ENCODE measurements at regions of chr6 and their contacts with region 1.

Region 1: DNA sequence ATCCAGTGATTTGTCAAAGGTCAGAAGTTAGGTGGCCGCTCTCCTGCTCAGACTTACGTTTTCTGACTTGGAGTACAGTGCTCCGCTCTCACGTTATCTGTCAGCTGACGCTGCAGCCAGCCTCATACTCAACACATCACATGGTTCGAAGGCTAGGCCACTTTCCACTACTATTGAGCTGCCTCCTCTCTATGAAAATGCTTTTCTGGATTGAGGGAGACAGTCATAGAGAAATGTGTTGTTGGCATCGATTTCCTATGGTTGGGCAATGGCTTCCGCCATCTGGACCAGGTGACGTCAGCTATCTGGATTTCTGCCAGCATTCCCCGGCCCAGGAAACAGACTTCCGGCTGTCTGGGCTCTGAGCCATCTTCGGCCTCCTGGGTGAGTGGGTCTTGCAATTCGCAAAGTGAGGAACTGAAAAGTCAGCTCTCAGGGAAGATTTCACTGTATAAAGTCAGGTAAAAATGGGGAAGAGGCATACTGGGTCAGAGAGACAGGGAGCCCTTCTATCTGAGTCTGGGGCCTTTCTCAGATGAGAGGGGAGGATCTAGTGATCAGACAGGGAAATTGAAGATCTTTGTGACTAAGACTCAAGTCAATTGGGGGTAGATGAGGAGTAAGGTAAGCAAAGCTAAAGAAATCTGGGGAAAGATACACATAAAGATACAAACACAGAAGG is 37.5 kb upstream of the IER3 start:
- DNase-seq: peak; percentile 98
- H3K4me3 Mint-ChIP-seq: peak overlapping the region; percentile 42
- H3K27ac Mint-ChIP-seq: peak overlapping the region; percentile 91
- H3K4me1 Mint-ChIP-seq: peaks cover 57% of the 10 kb centered on the region
- H3K27me3 Mint-ChIP-seq: no peaks in the 10 kb centered on the region
- CTCF ChIP-seq: no peak

Region 2: DNA sequence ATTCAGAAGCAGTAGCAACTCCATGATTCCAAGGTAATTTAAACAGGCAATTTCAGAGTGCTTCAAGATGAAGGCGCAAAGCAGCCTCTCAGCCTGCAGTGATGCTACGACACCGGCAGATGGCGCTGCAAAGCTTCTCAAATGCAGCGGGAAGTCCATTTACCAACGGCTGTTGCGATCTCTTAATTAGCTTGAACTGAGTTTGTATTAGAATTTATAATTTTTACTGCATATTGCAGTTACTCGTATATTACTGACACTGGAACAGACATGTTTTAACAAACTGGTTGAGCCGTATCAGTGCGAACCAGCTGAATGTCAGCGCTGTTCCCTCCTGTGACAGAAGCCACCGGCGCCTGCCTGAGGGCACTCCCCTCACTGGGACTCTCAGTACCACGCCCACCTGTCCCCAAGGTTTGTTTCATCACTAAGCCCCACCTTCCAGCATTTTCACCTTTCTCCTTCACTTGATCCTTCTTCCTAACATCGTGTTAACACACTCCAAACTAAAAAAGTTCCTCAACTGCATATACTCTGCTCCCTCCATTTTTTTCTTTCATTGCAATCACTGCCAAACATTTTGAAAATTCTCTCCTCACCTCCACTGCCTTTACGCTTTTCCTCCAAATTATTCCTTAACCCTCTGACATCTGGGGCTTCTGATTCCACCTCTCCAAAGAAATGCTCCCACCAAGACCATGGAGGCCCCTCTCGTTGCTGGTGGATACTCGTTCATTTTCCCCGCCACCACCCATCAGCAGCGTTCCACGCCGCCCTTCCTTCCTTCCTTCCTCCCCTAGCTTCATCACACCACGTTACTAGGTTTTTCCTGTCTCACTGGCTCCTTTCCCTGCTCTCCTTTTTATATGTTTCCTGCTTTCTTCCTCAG is 240.1 kb before region 1 on chr6:
- CTCF ChIA-PET with region 1: no interaction called
- POLR2A ChIA-PET with region 1: no interaction called
- intact Hi-C with region 1: no loop called
- DNase-seq: peak; percentile 74
- H3K4me3 Mint-ChIP-seq: peak overlapping the region; percentile 15
- H3K27ac Mint-ChIP-seq: no peak overlapping the region
- H3K4me1 Mint-ChIP-seq: peaks cover 12% of the 10 kb centered on the region
- H3K27me3 Mint-ChIP-seq: no peaks in the 10 kb centered on the region
- CTCF ChIP-seq: peak; percentile 92

Region 3: DNA sequence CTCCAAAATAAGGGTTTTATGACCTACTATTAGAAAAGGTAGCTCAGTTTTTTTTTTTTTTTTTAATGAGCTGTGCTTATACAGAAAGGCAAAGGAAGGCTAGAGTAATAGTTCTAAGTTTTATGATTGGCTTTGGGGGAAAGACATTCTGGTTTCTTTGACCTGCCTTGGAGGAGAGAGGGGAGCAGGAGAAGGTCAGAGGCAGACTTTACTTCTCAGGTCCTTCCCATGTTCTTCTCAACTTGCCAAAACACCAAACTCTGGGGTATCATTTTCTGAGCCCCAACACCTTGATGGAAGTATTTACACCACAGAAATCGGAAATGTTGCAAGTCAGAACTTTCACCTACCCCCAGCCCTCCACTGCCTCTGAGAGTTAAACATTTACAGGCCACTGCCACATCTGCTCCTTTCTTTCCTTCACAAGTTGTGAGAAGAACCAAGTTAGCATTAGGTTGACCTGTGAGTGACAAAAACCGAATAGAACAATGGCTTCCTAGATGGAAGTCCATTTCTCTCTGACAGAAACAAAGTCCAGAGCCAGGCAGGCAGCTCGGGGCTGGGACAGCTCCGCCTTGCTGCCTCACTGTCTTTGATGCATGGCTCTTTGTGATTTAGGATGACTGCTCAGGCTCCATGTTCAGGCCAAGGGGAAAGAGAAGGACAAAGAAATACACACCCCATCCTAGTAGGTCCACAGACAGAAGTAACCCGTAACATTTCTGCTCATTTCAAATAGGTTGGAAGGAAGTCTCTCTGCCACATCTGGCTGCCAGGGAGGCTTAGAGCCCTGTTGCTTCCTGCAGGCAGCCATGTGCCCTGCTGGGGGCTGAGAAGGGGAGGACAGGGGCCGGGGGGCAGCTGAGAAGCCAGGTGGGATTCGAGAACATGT is 18.3 kb before region 1 on chr6:
- CTCF ChIA-PET with region 1: interaction called, 3 read pairs
- POLR2A ChIA-PET with region 1: interaction called, 74 read pairs
- intact Hi-C with region 1: no loop called
- DNase-seq: no peak
- H3K4me3 Mint-ChIP-seq: no peak overlapping the region
- H3K27ac Mint-ChIP-seq: no peak overlapping the region
- H3K4me1 Mint-ChIP-seq: peaks cover 24% of the 10 kb centered on the region
- H3K27me3 Mint-ChIP-seq: no peaks in the 10 kb centered on the region
- CTCF ChIP-seq: no peak

Region 4: DNA sequence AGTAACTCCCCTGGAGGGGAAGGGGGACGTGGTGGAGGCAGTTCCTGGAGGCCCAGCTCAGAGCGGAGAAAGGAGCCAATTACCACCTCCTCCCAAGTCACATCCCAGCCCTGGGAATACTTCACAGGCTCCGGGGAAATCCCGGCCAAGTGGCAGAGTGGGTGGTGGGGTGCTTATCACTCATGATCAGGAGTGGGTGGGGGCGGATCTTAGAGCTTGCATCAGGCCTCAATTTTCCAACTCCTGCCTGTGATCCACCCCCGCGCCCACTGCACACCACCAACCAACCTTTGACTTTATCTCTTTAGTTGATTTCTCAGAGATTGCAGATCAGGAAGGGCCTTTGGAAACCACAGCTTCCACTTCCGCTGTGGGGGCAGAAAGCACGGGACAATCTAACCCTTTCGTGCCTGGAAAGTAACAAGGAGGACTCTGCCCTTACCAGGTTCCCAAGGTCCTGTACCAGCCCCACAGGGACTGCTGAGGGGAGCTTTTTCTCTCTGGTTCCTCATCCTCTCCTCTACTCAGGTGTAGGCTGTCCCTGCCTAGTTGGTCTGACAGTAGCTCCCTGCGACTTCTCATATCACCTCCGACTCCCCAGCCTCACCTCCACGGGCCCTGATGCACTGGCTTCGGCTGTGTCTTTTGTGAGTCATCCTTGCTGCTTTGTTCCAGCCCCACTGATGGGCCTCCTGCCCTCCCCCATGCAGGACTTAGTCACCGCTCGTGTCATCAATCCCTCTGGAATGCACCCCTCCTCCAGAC is 12.6 kb before region 1 on chr6:
- CTCF ChIA-PET with region 1: interaction called, 4 read pairs
- POLR2A ChIA-PET with region 1: interaction called, 74 read pairs
- intact Hi-C with region 1: no loop called
- DNase-seq: peak; percentile 94
- H3K4me3 Mint-ChIP-seq: peak overlapping the region; percentile 48
- H3K27ac Mint-ChIP-seq: peak overlapping the region; percentile 76
- H3K4me1 Mint-ChIP-seq: peaks cover 36% of the 10 kb centered on the region
- H3K27me3 Mint-ChIP-seq: no peaks in the 10 kb centered on the region
- CTCF ChIP-seq: no peak

Region 5: DNA sequence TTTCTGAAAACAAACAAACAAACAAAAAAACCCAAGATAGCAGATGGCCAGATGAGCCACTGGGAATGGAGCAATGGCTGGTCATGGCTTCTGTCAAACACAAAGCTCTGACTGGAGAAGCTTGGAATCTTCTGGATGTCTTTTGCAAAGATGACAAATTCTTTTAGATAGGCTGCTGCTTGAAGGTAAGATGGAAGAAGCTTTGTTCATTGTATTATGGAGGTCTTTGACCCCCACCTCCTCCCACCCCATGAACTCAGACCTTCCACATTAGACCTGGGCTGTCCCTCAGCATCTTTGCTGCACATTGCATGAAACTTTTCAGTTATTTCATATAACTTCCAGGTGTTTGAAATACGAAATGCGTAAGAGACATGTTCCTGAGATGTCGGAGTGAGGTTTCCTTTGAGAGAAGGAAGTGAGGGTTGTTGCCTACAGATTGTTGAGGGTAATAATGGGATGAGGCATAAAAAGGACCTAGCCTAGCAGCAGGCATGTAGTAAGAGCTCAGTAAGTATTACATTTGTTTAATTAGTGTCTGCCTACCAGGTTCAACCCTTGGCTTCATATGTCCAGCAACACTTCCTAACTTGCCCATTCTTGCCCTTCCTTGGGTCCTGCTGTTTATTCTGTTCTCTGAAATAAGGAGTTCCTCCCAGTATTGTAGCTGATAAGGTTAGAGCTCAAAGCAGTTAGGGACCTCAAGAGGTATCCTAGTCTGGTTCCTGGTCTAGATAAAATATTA is 13.8 kb after region 1 on chr6:
- CTCF ChIA-PET with region 1: no interaction called
- POLR2A ChIA-PET with region 1: interaction called, 11 read pairs
- intact Hi-C with region 1: no loop called
- DNase-seq: no peak
- H3K4me3 Mint-ChIP-seq: no peak overlapping the region
- H3K27ac Mint-ChIP-seq: no peak overlapping the region
- H3K4me1 Mint-ChIP-seq: no peaks in the 10 kb centered on the region
- H3K27me3 Mint-ChIP-seq: no peaks in the 10 kb centered on the region
- CTCF ChIP-seq: no peak

Region 6: DNA sequence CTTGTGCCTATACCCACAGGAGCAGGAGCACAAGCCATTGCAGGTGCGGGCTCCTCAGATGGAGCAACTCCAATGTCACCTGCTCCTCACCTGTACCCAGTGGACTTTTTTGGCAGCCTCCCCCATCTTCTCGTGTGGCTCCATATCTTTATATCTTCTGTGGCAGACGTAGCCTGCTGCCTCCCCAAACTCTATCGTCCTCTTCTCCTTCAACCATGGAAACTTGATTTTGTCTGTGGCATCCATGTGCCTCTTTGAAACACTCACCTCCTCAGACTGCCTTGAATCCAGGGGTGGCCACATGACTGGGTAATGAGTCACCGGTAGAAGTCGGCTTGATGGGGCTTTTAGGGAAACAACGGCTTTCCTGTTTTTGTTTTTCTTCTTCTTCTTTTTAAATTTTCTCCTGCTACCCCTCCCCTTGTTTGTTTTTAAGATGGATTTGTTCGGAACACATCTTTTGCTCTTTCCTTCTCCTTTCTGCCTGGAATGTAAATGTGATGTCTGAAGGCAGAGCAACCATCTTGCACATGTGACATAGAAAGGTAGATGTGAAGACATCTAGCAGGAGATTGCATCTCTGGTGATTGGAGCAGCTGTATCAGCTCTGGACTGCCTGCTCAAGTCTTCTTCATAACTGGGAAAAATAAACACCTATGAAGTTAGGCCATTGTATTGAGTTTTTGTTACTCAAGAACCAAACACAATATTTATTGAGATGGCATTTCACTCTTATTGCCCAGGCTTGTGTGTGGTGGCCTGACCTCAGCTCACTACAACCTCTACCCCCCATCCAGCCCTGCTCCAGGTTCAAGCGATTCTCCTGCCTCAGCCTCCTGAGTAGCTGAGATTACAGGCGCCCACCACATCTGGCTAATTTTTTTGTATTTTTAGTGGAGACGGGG is 32.5 kb after region 1 on chr6:
- CTCF ChIA-PET with region 1: interaction called, 37 read pairs
- POLR2A ChIA-PET with region 1: interaction called, 54 read pairs
- intact Hi-C with region 1: loop called (anchors 1 kb)
- DNase-seq: peak; percentile 88
- H3K4me3 Mint-ChIP-seq: no peak overlapping the region
- H3K27ac Mint-ChIP-seq: peak overlapping the region; percentile 92
- H3K4me1 Mint-ChIP-seq: peaks cover 39% of the 10 kb centered on the region
- H3K27me3 Mint-ChIP-seq: no peaks in the 10 kb centered on the region
- CTCF ChIP-seq: no peak

Region 7: DNA sequence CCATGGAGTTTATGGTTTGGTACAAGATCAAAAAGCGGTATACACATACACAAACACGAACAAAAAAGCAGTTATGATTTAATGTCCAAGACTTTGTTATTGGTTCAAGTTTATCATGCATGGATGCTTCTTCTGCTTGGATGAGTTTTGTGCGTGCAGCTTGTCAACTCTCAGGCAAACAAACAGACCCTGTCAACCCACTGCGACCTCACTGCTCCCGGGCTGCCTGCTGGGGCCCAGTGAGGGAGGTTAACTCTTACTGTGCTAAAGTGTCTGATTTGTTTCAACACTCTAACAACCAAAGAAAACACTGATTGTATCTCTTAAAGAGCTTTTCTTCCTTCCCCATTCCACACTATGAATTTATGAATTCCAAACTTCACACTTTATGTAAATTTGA is 75.7 kb after region 1 on chr6:
- CTCF ChIA-PET with region 1: no interaction called
- POLR2A ChIA-PET with region 1: no interaction called
- intact Hi-C with region 1: no loop called
- DNase-seq: no peak
- H3K4me3 Mint-ChIP-seq: no peak overlapping the region
- H3K27ac Mint-ChIP-seq: no peak overlapping the region
- H3K4me1 Mint-ChIP-seq: peaks cover 5% of the 10 kb centered on the region
- H3K27me3 Mint-ChIP-seq: no peaks in the 10 kb centered on the region
- CTCF ChIP-seq: no peak

Region 8: GRCh38 chr6:30942338-30943060 is 160.6 kb after region 1 on chr6:
- CTCF ChIA-PET with region 1: no interaction called
- POLR2A ChIA-PET with region 1: no interaction called
- intact Hi-C with region 1: no loop called
- DNase-seq: peak; percentile 88
- H3K4me3 Mint-ChIP-seq: peak overlapping the region; percentile 54
- H3K27ac Mint-ChIP-seq: peak overlapping the region; percentile 43
- H3K4me1 Mint-ChIP-seq: peaks cover 29% of the 10 kb centered on the region
- H3K27me3 Mint-ChIP-seq: no peaks in the 10 kb centered on the region
- CTCF ChIP-seq: peak; percentile 50